GM13976 (cell line): ENCODE measurements at regions of chr11 and their contacts with region 1.

Region 1: GRCh38 chr11:4539603-4540219 is 5.3 kb upstream of the OR52M1 start:
- DNase-seq: peak; percentile 43
- CTCF ChIP-seq: peak; percentile 80

Region 2: GRCh38 chr11:4044976-4045646 is 494.6 kb before region 1 on chr11:
- in situ Hi-C with region 1: no loop called
- DNase-seq: no peak
- CTCF ChIP-seq: no peak

Region 3: DNA sequence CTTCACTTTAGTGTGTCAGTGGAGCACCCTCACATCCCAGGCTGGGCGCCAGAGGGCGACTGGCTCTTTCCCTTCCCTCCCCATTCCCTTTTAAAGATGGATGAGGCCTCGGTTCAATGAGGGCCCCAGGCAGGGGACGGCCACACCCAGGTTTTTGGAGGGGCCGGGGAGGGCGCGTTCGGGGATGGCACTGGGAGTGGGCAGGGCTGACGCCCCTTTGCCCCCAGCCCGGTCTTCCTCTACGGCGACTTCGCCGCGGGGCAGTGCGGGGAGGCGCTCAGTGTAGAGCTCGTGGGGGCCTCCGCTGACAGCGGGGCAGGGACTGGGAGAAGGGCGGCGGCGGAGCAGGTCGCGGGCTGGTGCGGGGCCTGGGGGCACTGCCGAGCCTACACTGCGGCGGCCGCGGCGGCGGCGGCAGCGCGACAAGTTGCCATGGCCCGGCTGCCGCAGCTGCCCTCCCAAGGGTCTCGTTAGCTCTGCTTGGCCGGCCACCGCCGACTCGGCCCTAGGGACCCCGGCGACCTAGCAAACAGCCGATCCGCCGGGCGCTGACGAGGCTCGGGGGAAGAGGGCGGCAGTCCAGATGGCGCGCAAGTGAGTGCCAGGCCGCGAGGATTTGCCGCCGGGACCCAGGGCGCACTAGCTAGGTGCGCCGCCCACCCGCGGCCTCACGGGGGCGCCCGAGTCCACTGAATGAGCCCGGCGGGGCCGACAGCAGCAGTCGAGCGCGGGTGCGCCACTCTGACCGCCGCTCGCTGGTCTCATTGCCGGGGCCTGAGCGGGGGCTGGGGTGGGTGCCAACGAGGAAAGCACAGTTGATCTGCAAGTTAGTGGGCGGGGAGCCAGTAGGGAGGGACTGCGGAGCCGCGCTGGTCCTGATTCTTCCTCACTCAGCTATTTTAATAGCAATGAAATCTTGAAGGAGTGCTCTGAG is 352.4 kb before region 1 on chr11:
- in situ Hi-C with region 1: loop called (anchors 10 kb)
- DNase-seq: peak; percentile 92
- CTCF ChIP-seq: peak; percentile 99

Region 4: GRCh38 chr11:4482445-4482844 is 57.3 kb before region 1 on chr11 and contains the start of gene OR52K1:
- in situ Hi-C with region 1: no loop called
- DNase-seq: no peak
- CTCF ChIP-seq: no peak

Region 5: DNA sequence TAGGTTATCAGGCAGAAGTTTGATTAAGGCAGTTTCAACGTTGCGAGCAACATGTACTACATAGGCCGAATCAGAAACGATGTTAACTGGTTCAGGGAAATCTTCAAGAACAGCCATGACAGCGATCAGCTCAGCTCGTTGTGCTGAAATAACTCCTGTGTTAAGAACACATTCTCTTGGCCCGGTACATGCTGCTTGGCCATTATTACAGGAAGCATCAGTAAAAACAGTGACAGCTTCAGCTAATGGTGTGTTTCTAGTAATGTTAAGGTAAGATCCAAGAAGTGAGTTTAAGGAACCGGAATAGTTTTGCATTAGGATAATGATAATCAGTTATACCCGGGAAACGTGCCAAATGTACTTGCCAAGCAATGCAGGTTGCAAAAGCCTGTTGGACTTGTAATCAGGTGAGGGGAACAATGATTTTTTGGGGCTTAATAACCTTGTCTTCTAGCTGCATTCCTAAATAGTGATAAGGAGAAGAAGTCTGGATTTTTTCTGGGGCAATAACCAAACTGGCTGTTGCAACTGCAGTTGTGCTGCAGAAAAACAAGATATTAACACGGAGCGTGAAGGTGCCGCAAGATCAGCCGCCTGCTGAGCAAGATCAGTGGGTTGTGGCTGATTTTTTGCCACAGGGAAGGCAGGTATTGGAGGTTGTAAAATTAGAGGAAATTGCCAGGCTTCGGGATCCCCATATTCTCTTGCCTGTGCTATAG is 43.0 kb before region 1 on chr11:
- in situ Hi-C with region 1: no loop called
- DNase-seq: no peak
- CTCF ChIP-seq: no peak

Region 6: GRCh38 chr11:4643076-4643475 is 103.4 kb after region 1 on chr11:
- in situ Hi-C with region 1: no loop called
- DNase-seq: no peak
- CTCF ChIP-seq: no peak